ENCODE measurements at regions of chr13 and their contacts with region 1.

Region 1: DNA sequence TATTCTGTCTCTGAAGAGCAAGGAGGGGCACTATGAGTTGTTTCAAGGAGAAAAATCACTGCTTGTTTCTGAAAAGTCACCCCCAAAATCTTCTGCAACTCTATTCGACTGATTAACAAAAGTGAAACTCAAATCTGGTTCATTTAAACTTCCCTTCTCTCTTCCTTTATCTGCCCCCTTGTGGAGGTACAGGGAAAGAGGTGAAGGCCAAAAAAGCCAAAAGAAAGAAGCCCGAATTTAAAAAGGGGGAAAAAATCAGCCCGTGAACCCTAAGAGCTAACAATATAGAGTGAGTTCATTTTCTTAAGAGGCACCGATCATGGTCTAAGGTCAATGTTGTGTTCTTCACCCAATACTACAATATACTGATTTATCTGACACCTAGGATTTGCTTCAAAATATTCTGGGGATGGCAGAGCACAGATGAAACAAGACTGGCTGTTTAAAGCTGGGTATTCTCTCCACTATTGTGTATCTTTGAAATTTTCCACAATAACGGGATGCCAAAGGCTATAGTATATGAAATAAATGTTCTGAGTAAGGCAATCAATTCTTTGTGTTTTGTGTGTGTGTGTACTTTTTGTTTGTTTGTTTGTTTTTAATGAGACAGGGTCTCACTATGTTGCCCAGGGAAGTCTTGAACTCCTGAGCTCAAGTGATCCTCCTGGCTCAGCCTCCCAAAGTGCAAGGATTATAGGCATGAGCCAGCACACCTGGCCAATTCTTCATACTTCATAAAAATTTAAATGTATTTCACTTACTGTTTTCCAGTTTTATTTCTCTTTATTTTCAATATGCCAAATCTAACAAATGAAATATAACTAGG is 55.0 kb upstream of the EEF1AKMT1 start:
- DNase-seq: peak; percentile 64
- H3K4me3 Mint-ChIP-seq: peak overlapping the region; percentile 13
- H3K27ac Mint-ChIP-seq: peak overlapping the region; percentile 48
- H3K4me1 Mint-ChIP-seq: peaks cover 9% of the 10 kb centered on the region
- H3K27me3 Mint-ChIP-seq: no peaks in the 10 kb centered on the region

Region 2: DNA sequence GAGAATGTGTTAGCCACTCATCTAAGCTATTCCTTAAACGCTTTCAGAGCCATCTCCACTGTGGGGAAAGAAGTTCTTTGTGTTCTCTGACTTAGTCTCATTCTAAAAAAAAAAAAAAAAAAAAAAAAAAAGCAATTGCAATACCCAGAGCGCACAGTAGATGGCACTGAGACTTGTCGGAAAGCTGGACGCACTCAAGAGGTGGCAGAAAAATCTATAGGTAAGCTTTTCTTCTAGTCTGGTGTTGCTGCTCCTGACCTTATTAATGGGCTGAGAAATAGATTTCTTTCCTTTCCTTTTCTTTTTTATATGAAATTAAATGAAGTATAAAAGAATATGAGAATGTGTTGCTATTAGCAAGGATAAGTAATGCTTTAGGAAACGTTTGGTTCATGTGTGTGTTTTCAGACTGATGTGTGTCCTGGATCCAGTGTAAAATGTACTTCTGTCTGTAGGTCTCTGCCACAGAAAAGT is 631.4 kb before region 1 on chr13:
- CTCF ChIA-PET with region 1: interaction called, 10 read pairs
- POLR2A ChIA-PET with region 1: no interaction called
- DNase-seq: peak; percentile 27
- H3K4me3 Mint-ChIP-seq: no peak overlapping the region
- H3K27ac Mint-ChIP-seq: no peak overlapping the region
- H3K4me1 Mint-ChIP-seq: peaks cover 19% of the 10 kb centered on the region
- H3K27me3 Mint-ChIP-seq: peaks cover 43% of the 10 kb centered on the region

Region 3: GRCh38 chr13:20492641-20493040 is 336.1 kb before region 1 on chr13:
- CTCF ChIA-PET with region 1: interaction called, 11 read pairs
- POLR2A ChIA-PET with region 1: no interaction called
- DNase-seq: peak; percentile 20
- H3K4me3 Mint-ChIP-seq: no peak overlapping the region
- H3K27ac Mint-ChIP-seq: no peak overlapping the region
- H3K4me1 Mint-ChIP-seq: peaks cover 11% of the 10 kb centered on the region
- H3K27me3 Mint-ChIP-seq: no peaks in the 10 kb centered on the region

Region 4: DNA sequence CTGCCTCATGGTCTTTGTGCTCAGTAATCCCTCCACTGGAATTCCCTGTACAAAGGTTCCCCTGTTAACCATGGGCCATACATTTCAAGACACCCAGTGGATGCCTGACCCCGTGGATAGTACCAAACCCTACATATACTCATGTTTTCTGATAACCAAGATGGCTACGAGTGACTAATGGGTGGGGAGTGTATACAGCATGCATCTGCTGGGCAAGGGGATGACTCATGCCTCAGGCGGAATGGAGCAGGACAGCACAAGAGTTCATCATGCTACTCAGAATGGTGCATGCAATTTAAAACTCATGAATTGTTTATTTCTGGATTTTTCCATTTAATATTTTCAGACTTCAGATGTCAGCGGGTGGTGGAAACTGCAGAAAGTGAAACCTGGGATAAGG is 828.8 kb after region 1 on chr13:
- CTCF ChIA-PET with region 1: no interaction called
- POLR2A ChIA-PET with region 1: no interaction called
- DNase-seq: no peak
- H3K4me3 Mint-ChIP-seq: no peak overlapping the region
- H3K27ac Mint-ChIP-seq: no peak overlapping the region
- H3K4me1 Mint-ChIP-seq: no peaks in the 10 kb centered on the region
- H3K27me3 Mint-ChIP-seq: peaks cover 28% of the 10 kb centered on the region